ENCODE measurements at regions of chr10 and their contacts with region 1.

Region 1: DNA sequence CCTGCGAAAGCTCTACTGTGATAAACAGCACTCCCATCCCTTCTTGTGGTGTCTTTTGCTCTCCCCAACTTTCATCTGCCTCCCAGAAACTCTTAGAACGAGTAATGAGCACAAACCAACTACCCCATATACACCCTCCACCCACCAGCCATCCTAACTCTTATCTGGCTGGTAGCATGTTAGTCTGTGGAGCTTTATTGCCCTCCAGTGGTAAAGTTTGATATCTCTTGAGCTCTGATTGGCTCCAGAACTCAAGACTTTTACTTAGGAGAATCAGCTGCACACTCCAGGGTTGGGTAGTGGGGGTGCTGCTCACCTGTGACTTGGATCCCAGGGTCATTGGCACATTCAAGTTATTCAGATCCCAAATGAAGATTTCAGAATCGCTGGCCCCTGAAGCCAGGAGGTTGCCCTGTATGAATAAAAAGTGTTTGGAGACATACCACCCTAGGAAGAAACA is 10.9 kb downstream of the SEC31B start:
- DNase-seq: peak; percentile 70
- H3K4me3 ChIP-seq: no peak overlapping the region
- H3K27ac ChIP-seq: no peak overlapping the region
- H3K4me1 ChIP-seq: peaks cover 0 to 15% of the 10 kb centered on the region in 2 experiments; a peak in 2 of 4 replicates
- H3K27me3 ChIP-seq: no peaks in the 10 kb centered on the region
- CTCF ChIP-seq: peak; percentile 81
- EP300 ChIP-seq: no peak
- RAD21 ChIP-seq: peak; percentile 94

Region 2: GRCh38 chr10:98800263-98800662 is 1708.5 kb before region 1 on chr10:
- CTCF ChIA-PET with region 1: no interaction called
- POLR2A ChIA-PET with region 1: no interaction called
- DNase-seq: no peak
- H3K4me3 ChIP-seq: no peak overlapping the region
- H3K27ac ChIP-seq: no peak overlapping the region
- H3K4me1 ChIP-seq: no peaks in the 10 kb centered on the region
- H3K27me3 ChIP-seq: no peaks in the 10 kb centered on the region
- CTCF ChIP-seq: no peak
- EP300 ChIP-seq: no peak
- RAD21 ChIP-seq: no peak

Region 3: GRCh38 chr10:100338434-100339036 is 170.2 kb before region 1 on chr10:
- CTCF ChIA-PET with region 1: interaction called, 34 read pairs
- POLR2A ChIA-PET with region 1: no interaction called
- DNase-seq: peak; percentile 78
- H3K4me3 ChIP-seq: no peak overlapping the region; a peak in 1 of 4 replicates
- H3K27ac ChIP-seq: no peak overlapping the region
- H3K4me1 ChIP-seq: peaks cover 0 to 12% of the 10 kb centered on the region in 2 experiments; a peak in 1 of 4 replicates
- H3K27me3 ChIP-seq: peaks cover 14% of the 10 kb centered on the region; the same call in 1 of the 2 replicates
- CTCF ChIP-seq: peak; percentile 90
- EP300 ChIP-seq: no peak
- RAD21 ChIP-seq: peak; percentile 97

Region 4: DNA sequence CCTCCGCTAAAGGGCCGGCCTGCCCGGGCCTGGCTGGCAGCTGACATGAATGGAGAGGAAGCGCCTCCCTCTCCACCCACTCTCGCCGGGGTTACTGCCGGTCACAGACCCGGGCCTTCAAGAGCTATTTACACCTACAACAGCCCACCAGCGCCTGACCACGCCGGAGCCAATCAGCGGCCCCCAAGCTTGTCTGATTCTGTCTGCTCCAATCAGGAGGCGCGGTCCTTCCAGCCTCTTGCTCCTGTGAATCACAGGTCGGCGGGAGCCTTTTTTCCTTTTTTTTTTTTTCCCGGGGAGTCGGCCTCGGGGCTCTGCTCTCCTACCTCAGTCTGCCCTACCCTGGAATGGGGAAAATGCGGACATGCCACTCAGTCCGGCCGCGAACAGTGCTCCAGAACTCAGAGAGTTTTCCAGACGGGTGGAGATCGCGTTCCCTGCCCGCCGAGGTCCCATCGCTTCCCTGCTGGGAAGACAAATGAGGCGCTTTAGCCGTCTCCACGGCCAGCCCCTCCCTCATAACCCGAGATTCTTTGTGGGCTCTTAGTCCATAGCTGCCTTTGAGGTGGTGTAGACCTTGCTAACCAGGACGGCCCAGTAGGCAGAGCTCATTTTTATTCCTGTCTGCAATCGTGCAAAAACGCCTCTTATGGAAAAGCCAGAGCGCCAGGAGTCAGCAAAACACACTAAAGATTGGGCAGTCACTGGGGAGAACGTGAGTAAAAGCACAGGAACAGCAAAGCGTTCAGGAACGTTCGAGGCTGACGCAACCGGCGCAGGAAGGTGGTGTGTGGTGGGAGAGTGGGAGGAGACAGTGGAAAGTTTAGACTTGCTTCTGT is 135.2 kb before region 1 on chr10:
- CTCF ChIA-PET with region 1: no interaction called
- POLR2A ChIA-PET with region 1: no interaction called
- DNase-seq: peak; percentile 92
- H3K4me3 ChIP-seq: peak overlapping the region; percentile 56 to 69
- H3K27ac ChIP-seq: peak overlapping the region; percentile 97 to 99
- H3K4me1 ChIP-seq: peaks cover 20 to 27% of the 10 kb centered on the region in 2 experiments
- H3K27me3 ChIP-seq: no peaks in the 10 kb centered on the region
- CTCF ChIP-seq: no peak
- EP300 ChIP-seq: peak; percentile 7 to 12; a peak in 1 of 4 replicates
- RAD21 ChIP-seq: peak; percentile 3

Region 5: DNA sequence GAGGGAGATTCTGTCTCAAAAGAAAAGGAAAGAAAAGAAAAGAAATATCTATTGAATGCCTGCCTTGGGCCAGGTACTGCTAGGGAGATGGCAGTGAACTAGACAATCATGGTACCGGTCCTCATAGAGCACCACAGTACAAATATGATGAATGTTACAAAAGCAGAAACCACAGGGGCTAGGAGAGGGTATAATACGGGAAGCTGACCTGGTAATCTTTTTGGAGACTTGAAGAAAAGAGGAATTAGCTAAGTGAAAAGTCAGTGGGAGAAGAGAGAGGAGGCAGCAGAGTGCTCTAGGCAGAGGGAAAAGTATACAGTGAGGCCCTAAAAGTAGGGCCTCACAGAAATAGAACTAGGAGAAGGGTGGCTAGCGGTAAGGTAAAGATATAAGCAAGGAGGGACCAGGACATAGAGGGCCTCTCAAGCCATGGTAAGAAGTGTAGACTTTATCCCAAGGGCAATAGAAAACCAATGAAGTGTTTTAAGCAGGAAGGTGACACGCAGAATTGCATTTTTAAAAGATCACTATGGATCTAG is 88.7 kb before region 1 on chr10:
- CTCF ChIA-PET with region 1: no interaction called
- POLR2A ChIA-PET with region 1: no interaction called
- DNase-seq: no peak
- H3K4me3 ChIP-seq: no peak overlapping the region
- H3K27ac ChIP-seq: no peak overlapping the region
- H3K4me1 ChIP-seq: peaks cover 0 to 2% of the 10 kb centered on the region in 2 experiments; a peak in 1 of 4 replicates
- H3K27me3 ChIP-seq: peaks cover 11% of the 10 kb centered on the region; the same call in 1 of the 2 replicates
- CTCF ChIP-seq: no peak
- EP300 ChIP-seq: no peak
- RAD21 ChIP-seq: no peak

Region 6: GRCh38 chr10:100438674-100439315 is 69.9 kb before region 1 on chr10:
- CTCF ChIA-PET with region 1: interaction called, 150 read pairs
- POLR2A ChIA-PET with region 1: no interaction called
- DNase-seq: no peak
- H3K4me3 ChIP-seq: no peak overlapping the region
- H3K27ac ChIP-seq: no peak overlapping the region
- H3K4me1 ChIP-seq: no peaks in the 10 kb centered on the region
- H3K27me3 ChIP-seq: no peaks in the 10 kb centered on the region; the same call in 1 of the 2 replicates
- CTCF ChIP-seq: no peak
- EP300 ChIP-seq: no peak
- RAD21 ChIP-seq: no peak

Region 7: DNA sequence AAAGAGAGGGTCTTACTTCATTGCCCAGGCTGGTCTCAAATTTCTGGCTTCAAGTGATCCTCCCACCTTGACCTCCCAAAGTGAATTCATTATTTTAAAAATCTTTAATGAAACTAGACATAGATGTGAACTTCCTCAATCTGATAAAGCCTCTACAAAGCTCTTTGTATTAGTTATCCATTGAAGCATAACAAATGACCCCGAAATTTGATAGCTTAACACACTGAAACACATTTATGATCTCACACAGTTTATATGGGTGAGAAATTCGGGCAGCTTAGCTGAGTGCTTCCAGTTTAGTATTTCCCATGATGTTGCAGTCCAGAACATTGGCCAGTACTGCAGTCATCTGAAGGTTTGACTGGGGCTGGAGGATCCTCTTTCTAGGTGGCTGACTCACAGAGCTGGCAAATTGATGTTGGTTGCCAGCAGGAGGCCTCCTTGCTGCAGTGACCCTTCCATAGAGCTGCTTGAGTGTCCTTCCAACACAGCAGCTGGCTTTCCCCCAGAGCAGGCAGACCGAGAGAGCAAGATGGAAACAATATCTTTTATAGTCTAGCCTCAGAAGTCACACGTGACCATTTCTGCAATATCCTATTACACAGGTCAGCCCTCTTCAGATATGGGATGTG is 62.5 kb before region 1 on chr10:
- CTCF ChIA-PET with region 1: interaction called, 10 read pairs
- POLR2A ChIA-PET with region 1: no interaction called
- DNase-seq: no peak
- H3K4me3 ChIP-seq: no peak overlapping the region
- H3K27ac ChIP-seq: no peak overlapping the region
- H3K4me1 ChIP-seq: no peaks in the 10 kb centered on the region
- H3K27me3 ChIP-seq: no peaks in the 10 kb centered on the region; the same call in 1 of the 2 replicates
- CTCF ChIP-seq: no peak
- EP300 ChIP-seq: no peak
- RAD21 ChIP-seq: no peak